ENCODE measurements at regions of chr11 and their contacts with region 1.

Region 1: GRCh38 chr11:122754553-122755322 is 83.6 kb upstream of the CRTAM start:
- DNase-seq: no peak
- H3K4me3 ChIP-seq: no peak overlapping the region
- CTCF ChIP-seq: peak; percentile 33

Region 2: GRCh38 chr11:122765487-122766131 is 10.9 kb after region 1 on chr11:
- CTCF ChIA-PET with region 1: interaction called, 27 read pairs
- POLR2A ChIA-PET with region 1: no interaction called
- DNase-seq: no peak
- H3K4me3 ChIP-seq: no peak overlapping the region
- CTCF ChIP-seq: no peak

Region 3: GRCh38 chr11:122772945-122773344 is 18.2 kb after region 1 on chr11:
- CTCF ChIA-PET with region 1: interaction called, 71 read pairs
- POLR2A ChIA-PET with region 1: no interaction called
- DNase-seq: no peak
- H3K4me3 ChIP-seq: no peak overlapping the region
- CTCF ChIP-seq: no peak

Measured in AG04449 (cell line).